ENCODE measurements at regions of chr2 and their contacts with region 1.

Region 1: GRCh38 chr2:64523666-64524603 is at the start of gene AFTPH:
- DNase-seq: peak; percentile 100
- ATAC-seq: peak; percentile 93
- H3K4me3 Mint-ChIP-seq: peak within 1 kb of the TSS; percentile 99
- H3K27ac Mint-ChIP-seq: peak within 1 kb of the TSS; percentile 99
- H3K4me1 Mint-ChIP-seq: peaks cover 36% of the 10 kb centered on the region
- H3K27me3 Mint-ChIP-seq: peaks cover 6% of the 10 kb centered on the region
- total RNA-seq, gene AFTPH: 26.3 to 27.2 TPM

Region 2: DNA sequence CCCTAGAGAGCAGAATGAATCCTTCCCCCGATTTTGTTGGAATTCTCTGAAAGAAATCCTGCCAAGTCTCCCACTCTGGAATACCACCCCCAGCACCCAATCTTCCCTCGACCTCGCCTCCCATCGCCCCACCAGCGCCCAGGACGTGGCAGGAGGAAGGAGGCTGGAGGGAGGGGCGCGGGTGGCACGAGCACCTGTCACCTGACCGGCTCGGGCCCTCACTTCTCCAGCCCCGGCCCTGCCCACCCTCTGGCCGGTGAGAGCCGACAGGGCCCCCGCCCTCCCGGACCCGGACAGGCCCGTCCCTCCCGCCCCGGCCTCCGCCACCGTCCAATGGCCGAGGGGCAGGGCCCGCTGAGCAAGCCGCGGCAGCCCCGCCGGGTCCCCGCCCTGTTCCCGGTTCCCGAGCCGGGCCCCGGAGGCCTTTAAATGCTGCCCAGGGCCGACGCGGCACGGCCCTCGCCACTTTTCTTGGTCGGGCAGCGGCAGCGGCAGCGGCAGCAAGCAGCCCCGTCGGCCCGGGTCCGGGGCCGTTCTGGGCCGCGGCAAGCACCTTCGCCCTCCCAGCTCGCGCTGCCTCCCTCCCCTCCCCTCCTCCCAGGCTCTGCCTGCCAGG is 70.1 kb before region 1 on chr2 and contains the start of gene LGALSL:
- CTCF ChIA-PET with region 1: interaction called, 10 read pairs
- POLR2A ChIA-PET with region 1: interaction called, 3 read pairs
- DNase-seq: peak; percentile 45
- ATAC-seq: peak; percentile 76
- H3K4me3 Mint-ChIP-seq: peak within 1 kb of the TSS; percentile 77
- H3K27ac Mint-ChIP-seq: peak within 1 kb of the TSS; percentile 16
- H3K4me1 Mint-ChIP-seq: peaks cover 12% of the 10 kb centered on the region
- H3K27me3 Mint-ChIP-seq: peaks cover 20% of the 10 kb centered on the region
- total RNA-seq, gene LGALSL: 0.73 to 1.1 TPM

Region 3: DNA sequence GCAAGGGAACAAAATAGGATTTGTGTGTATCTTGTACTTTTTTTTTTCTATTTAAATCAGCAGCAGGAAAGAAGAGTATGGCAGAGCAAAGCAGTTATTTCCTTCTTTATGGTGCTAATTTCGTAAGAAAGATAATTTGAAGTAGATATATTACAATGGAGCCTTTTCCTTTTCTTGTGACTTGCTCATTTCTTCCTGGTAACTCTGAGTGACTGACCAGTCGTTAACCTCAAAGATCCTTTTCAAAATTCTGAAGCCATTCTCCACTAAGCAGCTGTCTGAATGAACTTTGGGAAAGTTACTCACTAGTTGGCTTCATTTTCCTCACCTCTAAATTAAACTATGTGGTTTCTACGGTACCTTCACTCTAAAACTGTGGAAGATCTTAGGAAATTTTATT is 24.8 kb after region 1 on chr2:
- CTCF ChIA-PET with region 1: interaction called, 15 read pairs
- POLR2A ChIA-PET with region 1: no interaction called
- DNase-seq: no peak
- ATAC-seq: no peak
- H3K4me3 Mint-ChIP-seq: no peak overlapping the region
- H3K27ac Mint-ChIP-seq: peak overlapping the region; percentile 14
- H3K4me1 Mint-ChIP-seq: peaks cover 11% of the 10 kb centered on the region
- H3K27me3 Mint-ChIP-seq: no peaks in the 10 kb centered on the region

Region 4: GRCh38 chr2:64568836-64569235 is 44.9 kb after region 1 on chr2:
- CTCF ChIA-PET with region 1: interaction called, 28 read pairs
- POLR2A ChIA-PET with region 1: interaction called, 5 read pairs
- DNase-seq: no peak
- ATAC-seq: no peak
- H3K4me3 Mint-ChIP-seq: no peak overlapping the region
- H3K27ac Mint-ChIP-seq: no peak overlapping the region
- H3K4me1 Mint-ChIP-seq: peaks cover 15% of the 10 kb centered on the region
- H3K27me3 Mint-ChIP-seq: no peaks in the 10 kb centered on the region

Region 5: DNA sequence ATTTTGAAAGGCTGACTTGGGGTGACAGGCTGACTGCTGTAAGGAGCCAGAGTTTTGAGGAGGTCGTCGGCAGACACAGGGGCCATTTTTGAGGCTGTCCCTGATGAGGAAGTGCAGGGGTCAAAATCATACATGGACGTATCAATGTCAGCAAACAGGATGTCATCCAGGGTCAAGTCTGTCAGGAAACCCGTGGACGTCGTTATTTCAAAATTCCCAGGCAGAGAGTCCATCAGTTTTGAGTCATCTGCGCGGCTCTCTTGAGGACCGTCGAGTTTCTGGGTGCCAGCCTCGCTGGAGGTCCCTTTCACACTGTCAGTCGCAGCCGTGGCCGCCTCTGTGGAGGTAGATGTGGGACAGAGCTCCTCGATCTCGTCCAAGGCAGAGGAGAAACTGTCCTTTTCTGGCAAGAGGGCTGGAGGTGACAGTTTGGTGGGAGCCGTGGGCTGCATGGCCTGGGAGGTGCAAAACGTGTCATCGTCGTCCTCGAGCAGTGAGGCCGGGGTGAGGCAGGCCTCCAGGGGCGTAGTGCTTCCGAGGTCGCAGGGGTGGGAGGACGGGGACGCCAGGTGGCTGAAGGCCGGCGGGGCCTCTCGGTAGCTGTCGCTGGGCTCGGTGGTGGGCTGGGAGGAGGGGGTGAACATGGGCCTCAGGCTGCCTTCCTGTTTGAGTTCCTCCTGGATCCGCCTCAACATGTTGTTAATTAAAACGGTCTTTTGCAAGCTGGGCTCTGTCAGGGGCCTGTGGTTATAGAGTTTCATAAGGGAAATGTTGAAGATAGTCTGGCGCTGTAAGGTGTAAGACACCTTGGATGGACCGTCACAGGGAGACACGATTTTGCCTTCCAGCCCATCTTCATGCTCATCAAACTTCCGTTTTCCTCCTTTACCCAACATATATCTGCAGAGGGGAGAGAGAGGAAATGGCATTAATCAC is 112.3 kb after region 1 on chr2:
- CTCF ChIA-PET with region 1: interaction called, 11 read pairs
- POLR2A ChIA-PET with region 1: interaction called, 5 read pairs
- DNase-seq: peak; percentile 49
- ATAC-seq: peak; percentile 69
- H3K4me3 Mint-ChIP-seq: peak overlapping the region; percentile 41
- H3K27ac Mint-ChIP-seq: peak overlapping the region; percentile 90
- H3K4me1 Mint-ChIP-seq: peaks cover 57% of the 10 kb centered on the region
- H3K27me3 Mint-ChIP-seq: no peaks in the 10 kb centered on the region

Region 6: GRCh38 chr2:64865073-64865830 is 341.3 kb after region 1 on chr2:
- CTCF ChIA-PET with region 1: interaction called, 26 read pairs
- POLR2A ChIA-PET with region 1: no interaction called
- DNase-seq: peak; percentile 69
- ATAC-seq: peak; percentile 94
- H3K4me3 Mint-ChIP-seq: peak overlapping the region; percentile 67
- H3K27ac Mint-ChIP-seq: no peak overlapping the region
- H3K4me1 Mint-ChIP-seq: no peaks in the 10 kb centered on the region
- H3K27me3 Mint-ChIP-seq: peaks cover 2% of the 10 kb centered on the region

Measured in activated CD8-positive, alpha-beta T cell treated with anti-CD3 and anti-CD28 coated beads, Interleukin-2, amount 10 ng/mL, durations not matched to agents 7 days and 5 days (primary cell).